ENCODE measurements at regions of chr1 and their contacts with region 1.

Region 1: DNA sequence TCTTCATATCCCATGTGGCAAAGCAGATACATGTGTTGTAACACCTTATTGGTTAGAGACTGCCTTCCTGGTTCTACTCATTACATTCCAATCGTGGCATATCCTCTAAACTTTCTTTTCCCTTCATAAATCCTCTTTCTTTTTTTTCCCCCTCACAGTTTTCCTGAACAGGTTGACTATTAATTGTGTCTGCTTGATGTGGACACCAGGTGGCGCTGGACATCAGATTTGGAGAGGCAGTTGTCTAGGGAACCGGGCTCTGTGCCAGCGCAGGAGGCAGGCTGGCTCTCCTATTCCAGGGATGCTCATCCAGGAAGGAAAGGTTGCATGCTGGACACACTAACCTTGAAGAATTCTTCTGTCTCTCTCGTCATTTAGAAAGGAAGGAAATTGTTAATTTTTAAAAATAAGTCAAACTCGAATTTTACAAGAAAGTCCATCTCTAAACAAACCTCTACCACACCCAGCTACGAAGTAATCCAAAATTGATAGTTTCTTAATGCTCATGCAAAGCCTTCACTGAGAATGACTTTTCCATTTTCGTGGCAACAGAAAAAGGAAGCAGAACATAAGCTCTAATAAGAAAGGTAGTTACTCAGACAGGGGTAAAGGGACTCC is 59.4 kb upstream of the ASB17 start:
- DNase-seq: peak; percentile 30
- ATAC-seq: peak; percentile 58
- H3K4me3 Mint-ChIP-seq: no peak overlapping the region
- H3K27ac Mint-ChIP-seq: no peak overlapping the region
- H3K4me1 Mint-ChIP-seq: no peaks in the 10 kb centered on the region
- H3K27me3 Mint-ChIP-seq: peaks cover 3% of the 10 kb centered on the region
- CTCF ChIP-seq: peak; percentile 48

Region 2: DNA sequence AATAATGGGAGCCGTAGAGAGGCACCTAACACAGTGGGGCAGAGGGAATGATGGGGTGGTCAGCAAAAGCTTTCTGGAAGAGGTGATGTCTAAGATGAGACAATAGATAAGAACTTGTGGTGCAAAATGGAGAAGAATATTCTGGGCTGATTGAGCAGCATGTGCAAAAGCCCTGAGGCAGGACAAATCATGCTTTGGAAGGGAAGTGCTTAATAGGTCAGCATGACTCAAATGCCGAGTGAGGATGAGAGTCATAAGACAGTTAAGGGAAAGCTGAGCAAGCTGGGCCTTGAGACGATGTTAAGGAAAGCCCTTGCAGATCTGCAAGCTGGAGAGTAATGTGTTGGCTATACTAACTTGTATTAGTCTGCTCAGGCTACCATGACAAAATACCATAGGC is 22.1 kb before region 1 on chr1:
- CTCF ChIA-PET with region 1: no interaction called
- POLR2A ChIA-PET with region 1: no interaction called
- intact Hi-C with region 1: no loop called
- DNase-seq: no peak
- ATAC-seq: no peak
- H3K4me3 Mint-ChIP-seq: no peak overlapping the region
- H3K27ac Mint-ChIP-seq: no peak overlapping the region
- H3K4me1 Mint-ChIP-seq: no peaks in the 10 kb centered on the region
- H3K27me3 Mint-ChIP-seq: peaks cover 2% of the 10 kb centered on the region
- CTCF ChIP-seq: no peak

Region 3: DNA sequence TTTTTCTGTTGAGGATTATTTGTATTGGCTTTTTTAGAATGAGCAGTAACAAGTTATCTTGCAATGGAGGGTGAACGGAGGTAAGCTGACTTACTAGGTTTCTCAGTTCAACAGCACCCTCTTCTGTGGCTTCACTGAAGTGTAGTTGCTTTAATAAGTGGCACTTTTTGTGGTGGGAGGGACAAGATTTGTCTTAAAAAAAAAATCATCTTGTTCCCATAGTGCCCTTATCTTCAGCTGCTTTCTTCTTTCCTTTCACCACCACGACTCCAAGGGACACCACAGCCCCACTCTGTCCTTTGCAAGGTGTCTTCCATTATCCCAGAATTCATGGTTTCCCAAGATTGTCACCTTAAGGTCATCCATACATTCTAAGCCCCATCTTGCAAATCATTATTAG is 1134.7 kb after region 1 on chr1:
- CTCF ChIA-PET with region 1: no interaction called
- POLR2A ChIA-PET with region 1: no interaction called
- intact Hi-C with region 1: loop called (anchors 5 kb)
- DNase-seq: no peak
- ATAC-seq: no peak
- H3K4me3 Mint-ChIP-seq: no peak overlapping the region
- H3K27ac Mint-ChIP-seq: no peak overlapping the region
- H3K4me1 Mint-ChIP-seq: no peaks in the 10 kb centered on the region
- H3K27me3 Mint-ChIP-seq: no peaks in the 10 kb centered on the region
- CTCF ChIP-seq: no peak

Region 4: GRCh38 chr1:77533660-77534305 is 1542.2 kb after region 1 on chr1:
- CTCF ChIA-PET with region 1: no interaction called
- POLR2A ChIA-PET with region 1: no interaction called
- intact Hi-C with region 1: loop called (anchors 10 kb)
- DNase-seq: no peak
- ATAC-seq: no peak
- H3K4me3 Mint-ChIP-seq: no peak overlapping the region
- H3K27ac Mint-ChIP-seq: no peak overlapping the region
- H3K4me1 Mint-ChIP-seq: peaks cover 4% of the 10 kb centered on the region
- H3K27me3 Mint-ChIP-seq: peaks cover 4% of the 10 kb centered on the region
- CTCF ChIP-seq: no peak

Region 5: GRCh38 chr1:77900687-77901293 is 1909.2 kb after region 1 on chr1:
- CTCF ChIA-PET with region 1: no interaction called
- POLR2A ChIA-PET with region 1: no interaction called
- intact Hi-C with region 1: loop called (anchors 10 kb)
- DNase-seq: no peak
- ATAC-seq: no peak
- H3K4me3 Mint-ChIP-seq: no peak overlapping the region
- H3K27ac Mint-ChIP-seq: no peak overlapping the region
- H3K4me1 Mint-ChIP-seq: no peaks in the 10 kb centered on the region
- H3K27me3 Mint-ChIP-seq: no peaks in the 10 kb centered on the region
- CTCF ChIP-seq: no peak

Measured in activated B cell treated with CpG ODN at 0.5 μM for 24 hours (primary cell).